ENCODE measurements at regions of chr19 and their contacts with region 1.

Region 1: GRCh38 chr19:53792721-53793433 is 31.2 kb downstream of the NLRP12 start:
- DNase-seq: peak; percentile 61
- H3K4me3 ChIP-seq: no peak overlapping the region
- H3K27ac ChIP-seq: no peak overlapping the region
- H3K27me3 ChIP-seq: no peaks in the 10 kb centered on the region
- CTCF ChIP-seq: peak; percentile 99

Region 2: GRCh38 chr19:53612755-53613154 is 180.1 kb before region 1 on chr19:
- CTCF ChIA-PET with region 1: no interaction called
- POLR2A ChIA-PET with region 1: no interaction called
- DNase-seq: no peak
- H3K4me3 ChIP-seq: no peak overlapping the region
- H3K27ac ChIP-seq: no peak overlapping the region
- H3K27me3 ChIP-seq: no peaks in the 10 kb centered on the region
- CTCF ChIP-seq: no peak

Region 3: DNA sequence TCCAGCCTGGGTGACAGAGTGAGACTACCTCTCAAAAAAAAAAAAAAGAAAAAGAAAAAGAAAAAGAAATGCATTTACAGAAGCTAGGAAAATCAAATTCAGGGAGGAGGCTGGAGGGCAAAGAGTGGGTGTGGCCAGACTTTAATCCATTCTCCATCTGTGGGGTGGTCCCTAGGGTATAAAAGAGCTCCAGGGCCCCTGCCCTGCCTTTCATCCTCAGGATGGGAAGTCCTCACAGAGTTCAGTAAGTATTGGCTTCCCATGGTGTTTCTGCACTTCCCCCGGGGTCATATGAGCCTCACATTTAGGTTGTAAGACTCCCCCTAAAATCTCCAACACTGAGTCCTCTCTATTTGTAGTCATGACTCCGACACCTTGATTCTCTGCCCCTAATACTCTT is 128.1 kb before region 1 on chr19:
- CTCF ChIA-PET with region 1: no interaction called
- POLR2A ChIA-PET with region 1: no interaction called
- DNase-seq: no peak
- H3K4me3 ChIP-seq: no peak overlapping the region
- H3K27ac ChIP-seq: no peak overlapping the region
- H3K27me3 ChIP-seq: no peaks in the 10 kb centered on the region
- CTCF ChIP-seq: no peak

Region 4: DNA sequence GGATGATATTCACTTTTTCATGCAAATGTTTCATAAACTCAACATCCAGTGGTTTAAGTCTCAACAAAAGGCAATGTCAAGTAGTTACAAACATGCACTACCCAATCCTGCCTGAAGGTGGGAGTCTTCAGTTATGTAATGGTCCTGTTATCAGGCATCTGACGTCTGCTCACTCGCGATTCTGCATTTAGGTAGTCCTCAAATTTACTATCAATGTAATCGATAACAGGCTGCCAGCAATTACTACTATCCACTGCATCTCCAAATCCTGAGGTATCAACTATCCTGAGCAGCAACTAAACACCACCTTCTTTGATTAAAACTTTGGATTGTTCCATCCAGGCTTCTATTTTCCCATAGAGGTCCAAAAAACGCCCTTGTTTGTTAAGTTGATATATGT is 19.9 kb before region 1 on chr19:
- CTCF ChIA-PET with region 1: interaction called, 18 read pairs
- POLR2A ChIA-PET with region 1: no interaction called
- DNase-seq: peak; percentile 6
- H3K4me3 ChIP-seq: no peak overlapping the region
- H3K27ac ChIP-seq: no peak overlapping the region
- H3K27me3 ChIP-seq: no peaks in the 10 kb centered on the region
- CTCF ChIP-seq: peak; percentile 73

Region 5: GRCh38 chr19:53782698-53783097 is 10.2 kb before region 1 on chr19:
- CTCF ChIA-PET with region 1: interaction called, 15 read pairs
- POLR2A ChIA-PET with region 1: no interaction called
- DNase-seq: no peak
- H3K4me3 ChIP-seq: no peak overlapping the region
- H3K27ac ChIP-seq: no peak overlapping the region
- H3K27me3 ChIP-seq: no peaks in the 10 kb centered on the region
- CTCF ChIP-seq: no peak

Region 6: DNA sequence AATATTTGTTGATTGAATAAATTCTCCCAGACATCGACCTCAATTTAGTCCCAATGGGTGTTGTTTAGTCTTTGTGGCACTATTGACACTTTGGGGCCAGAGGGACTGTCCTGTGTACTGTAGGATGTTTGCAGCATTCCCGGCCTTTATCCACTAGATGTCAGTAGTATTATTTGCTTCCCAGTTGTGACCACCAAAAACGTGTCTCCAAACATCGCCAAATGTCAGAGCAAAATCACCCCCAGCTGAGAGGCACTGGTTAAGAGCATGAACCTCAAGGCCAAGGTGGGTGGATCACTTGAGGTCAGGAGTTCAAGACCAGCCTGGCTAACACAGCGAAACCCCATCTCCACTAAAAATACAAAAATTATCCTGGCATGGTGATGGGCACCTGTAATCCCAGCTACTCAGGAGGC is 15.8 kb after region 1 on chr19:
- CTCF ChIA-PET with region 1: interaction called, 21 read pairs
- POLR2A ChIA-PET with region 1: no interaction called
- DNase-seq: no peak
- H3K4me3 ChIP-seq: no peak overlapping the region
- H3K27ac ChIP-seq: no peak overlapping the region
- H3K27me3 ChIP-seq: no peaks in the 10 kb centered on the region
- CTCF ChIP-seq: peak; percentile 67

Region 7: DNA sequence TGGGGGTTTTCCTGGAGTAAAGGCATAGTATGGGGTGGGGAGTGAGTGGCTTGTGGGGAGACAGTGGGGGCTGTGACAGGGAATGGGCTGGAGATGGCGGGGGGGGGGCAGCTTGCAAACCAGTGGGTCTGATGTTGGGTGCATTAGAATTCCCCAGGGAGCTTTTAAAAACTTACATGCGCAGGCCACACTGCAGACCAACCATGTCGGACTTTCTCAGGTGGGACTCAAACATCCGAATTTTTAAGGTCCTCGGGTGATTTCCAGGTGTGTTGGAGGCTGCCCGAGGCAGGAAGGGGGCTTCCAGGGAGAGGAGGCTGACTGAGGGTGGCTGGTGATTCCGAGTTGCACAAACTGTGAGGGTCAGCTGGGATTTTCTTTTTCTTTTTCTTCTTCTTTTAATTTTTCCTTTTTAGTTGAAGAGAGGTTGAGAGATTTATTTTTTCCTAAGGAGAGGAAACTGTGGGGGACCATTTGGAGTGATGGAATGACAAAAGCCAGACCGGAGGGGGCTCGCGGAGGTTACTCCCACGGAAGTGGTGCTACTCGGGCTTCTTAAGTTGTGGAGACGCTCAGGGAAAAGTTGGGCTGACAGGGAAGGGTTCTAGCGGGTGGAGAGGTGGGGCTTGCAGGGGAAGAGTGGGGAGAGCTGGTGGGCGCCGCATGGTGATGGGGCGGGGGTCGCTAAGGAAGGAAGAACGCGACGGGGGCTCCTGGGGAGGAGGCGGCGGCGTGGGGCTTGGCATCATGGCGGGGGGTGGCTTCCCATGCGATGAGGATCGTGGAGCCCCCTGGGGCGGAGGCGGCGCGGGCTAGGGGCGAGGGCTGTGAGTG is 168.9 kb after region 1 on chr19:
- CTCF ChIA-PET with region 1: no interaction called
- POLR2A ChIA-PET with region 1: no interaction called
- DNase-seq: no peak
- H3K4me3 ChIP-seq: peak overlapping the region; percentile 66
- H3K27ac ChIP-seq: no peak overlapping the region
- H3K27me3 ChIP-seq: peaks cover 38% of the 10 kb centered on the region
- CTCF ChIP-seq: no peak

Region 8: DNA sequence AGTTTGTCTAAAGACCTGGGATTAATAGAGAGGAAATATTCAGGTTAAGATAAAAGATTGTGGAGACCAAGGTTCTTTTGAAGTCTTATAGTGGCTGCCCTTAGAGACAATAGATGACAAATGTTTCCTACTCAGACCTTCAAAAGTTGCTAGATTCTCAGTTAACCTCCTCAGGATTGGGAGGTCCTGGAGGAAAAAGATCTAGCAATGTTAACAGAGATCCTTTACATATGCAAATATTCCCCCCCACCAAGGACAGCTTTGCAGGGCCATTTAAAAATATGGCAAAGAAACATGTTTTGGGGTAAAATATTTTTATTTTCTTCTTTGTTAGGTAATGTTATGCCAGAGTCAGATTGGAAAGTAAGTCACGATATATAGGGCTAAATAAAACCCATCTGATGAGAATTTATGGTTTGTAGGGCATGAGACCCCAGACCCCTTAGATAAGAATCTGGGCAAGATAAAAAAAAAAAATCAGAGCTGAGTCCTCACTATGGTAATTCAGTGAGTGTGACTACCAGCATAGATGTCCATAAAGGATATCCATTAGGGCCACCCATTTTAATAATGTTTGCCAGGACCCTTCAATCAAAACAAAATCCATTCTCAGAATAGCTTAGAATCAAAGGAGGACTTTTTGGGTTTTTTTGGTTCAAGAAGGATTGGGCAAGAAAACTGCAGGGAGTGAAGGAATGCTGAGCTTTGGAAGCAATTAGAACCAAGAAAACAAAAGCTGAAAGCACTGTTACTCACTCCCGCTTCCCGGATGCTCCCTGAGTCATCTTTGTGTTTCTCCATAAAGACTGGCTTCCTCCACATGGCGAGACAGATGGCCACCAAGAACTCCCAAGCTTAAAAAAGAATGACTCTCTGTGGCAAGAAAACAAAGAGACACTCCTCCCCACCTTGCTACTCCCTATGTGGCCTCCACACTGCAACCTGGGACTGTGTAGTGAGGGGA is 242.6 kb after region 1 on chr19:
- CTCF ChIA-PET with region 1: interaction called, 97 read pairs
- POLR2A ChIA-PET with region 1: no interaction called
- DNase-seq: peak; percentile 50
- H3K4me3 ChIP-seq: no peak overlapping the region
- H3K27ac ChIP-seq: peak overlapping the region; percentile 85
- H3K27me3 ChIP-seq: no peaks in the 10 kb centered on the region
- CTCF ChIP-seq: no peak

Region 9: GRCh38 chr19:54041969-54042606 is 249.2 kb after region 1 on chr19:
- CTCF ChIA-PET with region 1: interaction called, 20 read pairs
- POLR2A ChIA-PET with region 1: no interaction called
- DNase-seq: no peak
- H3K4me3 ChIP-seq: no peak overlapping the region
- H3K27ac ChIP-seq: no peak overlapping the region
- H3K27me3 ChIP-seq: peaks cover 4% of the 10 kb centered on the region
- CTCF ChIP-seq: no peak